ENCODE measurements at regions of chr2 and their contacts with region 1.

Region 1: DNA sequence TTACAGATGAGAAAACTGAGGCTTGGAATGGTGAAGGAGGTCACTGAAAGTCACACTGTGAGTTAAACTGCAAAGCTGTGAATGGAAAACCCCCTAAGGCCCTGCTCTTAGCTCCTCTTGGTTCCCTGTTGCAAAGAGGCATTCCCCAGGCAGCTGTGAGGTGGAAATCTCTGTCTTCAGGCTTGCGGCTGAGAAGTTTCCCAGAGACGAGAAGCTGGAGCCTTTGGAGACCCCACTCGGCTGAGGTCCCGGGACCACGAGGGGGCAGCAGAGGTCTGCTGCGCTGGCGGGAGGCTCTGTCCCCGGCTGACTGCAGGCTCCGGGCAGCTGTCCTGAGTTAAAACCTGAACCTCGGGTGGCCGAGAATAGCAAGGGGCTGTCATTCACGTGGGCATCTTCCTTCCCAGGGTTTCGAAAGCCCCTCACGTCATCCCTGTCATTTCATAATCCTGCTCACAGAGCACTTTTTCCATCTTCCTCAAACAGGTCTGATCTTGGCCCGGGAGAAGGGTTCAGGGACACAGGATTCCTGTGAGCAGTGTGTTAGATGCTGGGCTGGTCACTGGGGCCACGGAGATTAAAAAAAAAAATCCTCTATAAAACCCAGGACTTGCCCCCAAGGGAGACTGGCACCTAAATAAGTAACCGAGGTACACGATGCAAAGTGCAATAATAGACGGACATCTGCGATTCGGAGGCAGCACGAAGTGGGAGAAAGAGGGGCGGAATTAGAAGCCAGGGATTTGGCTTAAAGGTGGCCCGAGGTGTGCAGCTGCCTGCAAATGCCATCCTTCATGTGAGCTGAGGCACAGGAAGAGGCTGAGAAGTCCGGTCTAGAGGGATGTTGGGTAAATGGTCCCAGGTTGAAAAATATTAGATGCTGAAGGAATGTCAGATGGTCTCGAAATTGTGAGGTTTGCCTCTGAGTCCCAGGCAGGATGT is 24.6 kb upstream of the ATOH8 start:
- DNase-seq: peak; percentile 92
- ATAC-seq: peak; percentile 98
- H3K4me3 Mint-ChIP-seq: no peak overlapping the region
- H3K27ac Mint-ChIP-seq: no peak overlapping the region
- H3K4me1 Mint-ChIP-seq: no peaks in the 10 kb centered on the region
- H3K27me3 Mint-ChIP-seq: no peaks in the 10 kb centered on the region; the same call in 1 of the 2 replicates
- CTCF ChIP-seq: peak; percentile 86

Region 2: DNA sequence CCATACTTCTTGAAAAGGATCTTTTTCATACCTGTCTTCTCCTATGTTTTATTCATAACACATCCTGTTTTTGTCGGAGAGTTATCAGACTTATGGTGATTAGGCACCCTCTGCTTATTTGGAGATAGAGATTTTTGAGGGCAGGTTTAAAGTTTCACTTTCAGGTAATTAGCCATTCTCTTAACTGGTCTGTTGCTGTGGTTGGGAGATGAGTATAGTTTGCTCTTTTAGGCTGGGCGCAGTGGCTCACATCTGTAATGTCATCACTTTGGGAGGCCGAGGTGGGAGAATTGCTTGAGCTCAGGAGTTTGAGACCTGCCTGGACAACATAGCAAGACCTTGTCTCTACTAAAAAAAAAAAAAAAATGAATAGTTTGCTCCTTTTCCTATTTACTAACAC is 86.4 kb before region 1 on chr2:
- CTCF ChIA-PET with region 1: interaction called, 14 read pairs
- POLR2A ChIA-PET with region 1: no interaction called
- DNase-seq: no peak
- ATAC-seq: no peak
- H3K4me3 Mint-ChIP-seq: no peak overlapping the region
- H3K27ac Mint-ChIP-seq: no peak overlapping the region
- H3K4me1 Mint-ChIP-seq: no peaks in the 10 kb centered on the region
- H3K27me3 Mint-ChIP-seq: no peaks in the 10 kb centered on the region; the same call in 1 of the 2 replicates
- CTCF ChIP-seq: no peak

Region 3: DNA sequence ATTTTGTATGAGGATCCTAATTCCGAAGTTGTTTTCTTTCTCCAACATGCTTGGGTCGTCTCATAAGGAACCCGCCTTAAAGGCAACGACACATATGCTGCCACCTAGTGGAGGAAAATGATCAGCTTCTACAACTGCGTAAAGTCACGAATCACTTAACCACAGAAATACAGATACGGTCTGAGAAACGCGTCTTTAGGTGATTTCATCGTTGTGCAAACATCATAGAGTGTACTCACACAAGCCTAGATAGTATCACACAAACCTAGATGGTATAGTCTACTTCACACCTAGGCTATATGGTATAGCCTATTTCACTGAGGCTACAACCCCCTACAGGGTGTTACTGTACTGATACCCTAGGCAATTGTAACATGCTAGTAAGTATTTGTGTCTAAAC is 21.9 kb before region 1 on chr2:
- CTCF ChIA-PET with region 1: interaction called, 17 read pairs
- POLR2A ChIA-PET with region 1: no interaction called
- DNase-seq: peak; percentile 47
- ATAC-seq: peak; percentile 82
- H3K4me3 Mint-ChIP-seq: no peak overlapping the region
- H3K27ac Mint-ChIP-seq: no peak overlapping the region
- H3K4me1 Mint-ChIP-seq: peaks cover 15% of the 10 kb centered on the region
- H3K27me3 Mint-ChIP-seq: peaks cover 12% of the 10 kb centered on the region
- CTCF ChIP-seq: peak; percentile 72; the same call in 1 of the 2 replicates

Region 4: GRCh38 chr2:85741833-85742455 is 12.8 kb after region 1 on chr2:
- CTCF ChIA-PET with region 1: interaction called, 38 read pairs
- POLR2A ChIA-PET with region 1: no interaction called
- DNase-seq: no peak
- ATAC-seq: no peak
- H3K4me3 Mint-ChIP-seq: no peak overlapping the region
- H3K27ac Mint-ChIP-seq: no peak overlapping the region
- H3K4me1 Mint-ChIP-seq: peaks cover 7% of the 10 kb centered on the region
- H3K27me3 Mint-ChIP-seq: peaks cover 10% of the 10 kb centered on the region
- CTCF ChIP-seq: no peak

Region 5: GRCh38 chr2:85772019-85772745 is 43.0 kb after region 1 on chr2:
- CTCF ChIA-PET with region 1: interaction called, 17 read pairs
- POLR2A ChIA-PET with region 1: no interaction called
- DNase-seq: peak; percentile 59
- ATAC-seq: peak; percentile 51
- H3K4me3 Mint-ChIP-seq: no peak overlapping the region
- H3K27ac Mint-ChIP-seq: no peak overlapping the region
- H3K4me1 Mint-ChIP-seq: peaks cover 47% of the 10 kb centered on the region
- H3K27me3 Mint-ChIP-seq: peaks cover 26% of the 10 kb centered on the region
- CTCF ChIP-seq: no peak

Region 6: DNA sequence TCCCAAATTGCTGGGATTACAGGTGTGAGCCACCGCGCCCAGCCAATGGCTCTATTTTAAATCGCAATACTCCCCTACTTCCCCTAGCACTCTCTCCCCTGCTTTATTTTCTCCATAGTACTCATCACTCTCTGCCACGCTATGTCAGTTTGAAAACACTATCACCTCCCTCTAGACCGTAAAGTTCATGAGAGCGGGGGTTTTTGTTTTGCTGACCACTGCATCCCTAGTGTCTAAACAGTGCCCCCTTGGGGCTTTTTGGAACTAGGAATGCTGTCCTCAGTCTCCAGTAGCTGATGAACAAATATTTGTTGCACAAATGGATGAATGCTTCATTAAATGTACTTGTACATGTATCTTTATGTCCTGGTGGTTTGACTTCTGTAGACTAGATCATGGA is 68.8 kb after region 1 on chr2:
- CTCF ChIA-PET with region 1: interaction called, 19 read pairs
- POLR2A ChIA-PET with region 1: no interaction called
- DNase-seq: no peak
- ATAC-seq: peak; percentile 73
- H3K4me3 Mint-ChIP-seq: no peak overlapping the region
- H3K27ac Mint-ChIP-seq: no peak overlapping the region
- H3K4me1 Mint-ChIP-seq: no peaks in the 10 kb centered on the region
- H3K27me3 Mint-ChIP-seq: peaks cover 7% of the 10 kb centered on the region; the same call in 1 of the 2 replicates
- CTCF ChIP-seq: 0 out of 2 replicates have a peak, but pooled peaks have one; percentile 13

Region 7: GRCh38 chr2:85813982-85814801 is 85.0 kb after region 1 on chr2:
- CTCF ChIA-PET with region 1: interaction called, 100 read pairs
- POLR2A ChIA-PET with region 1: no interaction called
- DNase-seq: peak; percentile 96
- ATAC-seq: peak; percentile 95
- H3K4me3 Mint-ChIP-seq: no peak overlapping the region
- H3K27ac Mint-ChIP-seq: no peak overlapping the region
- H3K4me1 Mint-ChIP-seq: peaks cover 9% of the 10 kb centered on the region
- H3K27me3 Mint-ChIP-seq: peaks cover 3% of the 10 kb centered on the region; the same call in 1 of the 2 replicates
- CTCF ChIP-seq: peak; percentile 95

Measured in WTC11 (cell line).